Naive thymus-derived CD8-positive, alpha-beta T cell (primary cell): ENCODE measurements at regions of chr5 and their contacts with region 1.

Region 1: GRCh38 chr5:142108432-142109330 is at the start of gene NDFIP1:
- DNase-seq: peak; percentile 77 to 92 (median 88)
- ATAC-seq: peak; percentile 73 to 74
- H3K4me3 Mint-ChIP-seq: peak within 1 kb of the TSS; percentile 93 to 100 (median 96)
- H3K27ac Mint-ChIP-seq: peak within 1 kb of the TSS; percentile 92 to 100 (median 100)
- H3K4me1 Mint-ChIP-seq: peaks cover 28 to 81% (median 76%) of the 10 kb centered on the region in 4 donors
- H3K27me3 Mint-ChIP-seq: no peaks in the 10 kb centered on the region
- polyA plus RNA-seq, gene NDFIP1: 102 to 144 (median 127) TPM

Region 2: GRCh38 chr5:141968914-141969608 is 139.6 kb before region 1 on chr5 and contains the start of gene RNF14:
- POLR2A ChIA-PET with region 1: interaction called, 13 read pairs
- DNase-seq: peak; percentile 91 to 96 (median 94)
- ATAC-seq: peak; percentile 94 to 96
- H3K4me3 Mint-ChIP-seq: peak within 1 kb of the TSS; percentile 92 to 99 (median 96)
- H3K27ac Mint-ChIP-seq: peak within 1 kb of the TSS; percentile 92 to 99 (median 97)
- H3K4me1 Mint-ChIP-seq: peaks cover 7 to 39% (median 32%) of the 10 kb centered on the region in 4 donors
- H3K27me3 Mint-ChIP-seq: no peaks in the 10 kb centered on the region
- polyA plus RNA-seq, gene RNF14: 27.4 to 40.1 (median 30.1) TPM

Region 3: GRCh38 chr5:142012792-142013388 is 95.8 kb before region 1 on chr5 and contains the start of gene GNPDA1:
- POLR2A ChIA-PET with region 1: interaction called, 76 read pairs
- DNase-seq: peak; percentile 28 to 70 (median 59)
- ATAC-seq: peak; percentile 68 to 75
- H3K4me3 Mint-ChIP-seq: peak within 1 kb of the TSS; percentile 79 to 91 (median 87)
- H3K27ac Mint-ChIP-seq: peak within 1 kb of the TSS; percentile 87 to 96 (median 92)
- H3K4me1 Mint-ChIP-seq: peaks cover 22 to 80% (median 64%) of the 10 kb centered on the region in 4 donors
- H3K27me3 Mint-ChIP-seq: no peaks in the 10 kb centered on the region
- polyA plus RNA-seq, gene GNPDA1: 40.9 to 51.0 (median 43.9) TPM

Region 4: DNA sequence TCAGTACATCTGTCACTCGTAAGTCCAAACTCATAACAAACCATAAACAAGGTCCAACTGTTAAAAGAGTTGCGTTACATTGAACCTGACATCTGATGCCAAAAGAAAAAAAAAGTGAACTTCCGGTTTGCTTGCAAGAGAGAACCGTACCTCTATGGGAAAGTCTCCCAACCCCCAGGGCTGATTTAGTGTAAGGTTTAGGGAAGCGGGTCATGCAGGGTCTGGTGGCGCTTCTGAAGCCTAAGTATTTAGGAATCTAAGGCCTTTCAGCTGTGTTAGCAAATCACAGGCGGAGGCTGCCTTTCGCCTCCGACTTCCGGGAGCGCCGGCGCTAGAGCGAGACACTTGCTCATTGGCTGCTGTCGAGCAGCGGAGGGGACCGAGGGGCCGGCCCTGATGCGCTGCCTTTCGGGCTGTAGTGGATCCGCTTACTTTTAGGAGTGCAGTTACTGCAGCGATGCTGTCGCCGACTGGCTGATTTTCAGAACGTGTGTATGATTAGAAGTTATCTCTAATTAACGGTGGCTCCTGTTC is 83.8 kb before region 1 on chr5:
- POLR2A ChIA-PET with region 1: interaction called, 26 read pairs
- DNase-seq: peak; percentile 72 to 90 (median 80)
- ATAC-seq: peak; percentile 100
- H3K4me3 Mint-ChIP-seq: peak overlapping the region; percentile 82 to 96 (median 90)
- H3K27ac Mint-ChIP-seq: peak overlapping the region; percentile 90 to 100 (median 99)
- H3K4me1 Mint-ChIP-seq: peaks cover 8 to 20% (median 17%) of the 10 kb centered on the region in 4 donors
- H3K27me3 Mint-ChIP-seq: peaks cover 0 to 7% (median 0%) of the 10 kb centered on the region in 5 donors

Region 5: DNA sequence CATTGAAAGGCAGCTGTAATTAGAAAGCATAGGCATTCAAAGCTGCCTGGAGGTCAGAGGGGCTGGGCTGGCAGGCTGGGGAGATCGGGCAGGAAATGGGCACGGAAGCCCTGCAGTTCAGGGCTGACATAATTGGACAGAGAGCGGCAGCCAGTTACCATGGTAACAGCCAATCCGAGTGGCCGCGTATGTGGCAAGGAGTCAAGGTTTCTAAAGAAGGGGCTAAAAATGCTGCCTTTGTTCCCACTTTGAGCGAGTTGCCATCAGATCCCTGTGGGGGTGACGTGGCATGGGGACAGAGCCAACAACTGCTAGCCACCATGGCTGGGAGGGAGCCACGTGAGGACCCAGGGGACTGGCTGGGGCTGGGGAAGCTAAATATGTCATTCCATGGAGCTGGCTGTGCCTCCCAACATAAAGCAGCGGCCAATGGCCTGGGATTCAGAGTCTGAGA is 44.8 kb before region 1 on chr5:
- POLR2A ChIA-PET with region 1: interaction called, 22 read pairs
- DNase-seq: peak in 9 of 10 donors; percentile 18 to 84 (median 57)
- ATAC-seq: peak; percentile 95 to 97
- H3K4me3 Mint-ChIP-seq: peak overlapping the region; percentile 57 to 86 (median 76)
- H3K27ac Mint-ChIP-seq: peak overlapping the region; percentile 35 to 94 (median 84)
- H3K4me1 Mint-ChIP-seq: peaks cover 14 to 25% (median 21%) of the 10 kb centered on the region in 4 donors
- H3K27me3 Mint-ChIP-seq: peaks cover 0 to 2% (median 0%) of the 10 kb centered on the region in 5 donors

Region 6: GRCh38 chr5:142095651-142096330 is 12.9 kb before region 1 on chr5:
- POLR2A ChIA-PET with region 1: interaction called, 119 read pairs
- DNase-seq: peak; percentile 49 to 96 (median 88)
- ATAC-seq: peak; percentile 85 to 92
- H3K4me3 Mint-ChIP-seq: peak overlapping the region; percentile 48 to 85 (median 64)
- H3K27ac Mint-ChIP-seq: peak overlapping the region; percentile 82 to 99 (median 96)
- H3K4me1 Mint-ChIP-seq: peaks cover 21 to 69% (median 63%) of the 10 kb centered on the region in 4 donors
- H3K27me3 Mint-ChIP-seq: no peaks in the 10 kb centered on the region

Region 7: DNA sequence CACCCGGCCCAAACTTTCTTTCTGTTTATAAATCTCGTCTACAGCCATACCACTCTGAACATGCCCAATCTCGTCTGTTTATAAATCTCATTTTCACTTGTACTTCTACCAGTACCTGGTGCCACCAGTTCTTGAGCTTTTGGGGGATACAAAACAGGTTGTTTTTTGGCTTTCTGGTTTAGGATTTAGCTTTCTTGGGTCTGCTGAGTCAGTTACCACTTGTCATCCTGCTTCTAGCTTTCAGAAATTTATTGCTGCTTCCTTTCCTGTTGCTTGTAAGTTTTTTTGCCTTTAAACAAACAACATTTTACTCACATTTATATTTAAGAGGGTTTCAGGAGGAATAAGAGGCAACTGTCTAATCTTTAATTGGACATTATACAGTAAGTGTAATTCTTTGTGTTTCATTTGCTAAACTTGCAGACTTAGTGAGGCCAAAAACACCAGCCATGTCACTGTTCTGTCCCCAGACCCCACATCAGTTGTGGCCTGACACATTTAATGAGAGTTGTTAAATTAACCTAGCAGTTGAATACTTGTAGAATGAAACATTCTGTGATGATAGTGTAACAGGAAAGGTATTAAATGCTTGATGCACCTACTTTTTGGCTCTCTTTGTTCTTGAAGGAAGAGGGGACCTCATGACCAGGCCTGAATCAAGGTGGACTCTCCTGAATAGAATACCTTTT is 11.7 kb after region 1 on chr5:
- POLR2A ChIA-PET with region 1: interaction called, 13 read pairs
- DNase-seq: no peak
- ATAC-seq: peak; percentile 26 to 28
- H3K4me3 Mint-ChIP-seq: peak overlapping the region; percentile 22 to 81 (median 66)
- H3K27ac Mint-ChIP-seq: peak overlapping the region; percentile 13 to 89 (median 70)
- H3K4me1 Mint-ChIP-seq: peaks cover 37 to 87% (median 84%) of the 10 kb centered on the region in 4 donors
- H3K27me3 Mint-ChIP-seq: no peaks in the 10 kb centered on the region